Activated naive CD4-positive, alpha-beta T cell treated with anti-CD3 and anti-CD28 coated beads for 36 hours (primary cell): ENCODE measurements at regions of chr1 and their contacts with region 1.

Region 1: DNA sequence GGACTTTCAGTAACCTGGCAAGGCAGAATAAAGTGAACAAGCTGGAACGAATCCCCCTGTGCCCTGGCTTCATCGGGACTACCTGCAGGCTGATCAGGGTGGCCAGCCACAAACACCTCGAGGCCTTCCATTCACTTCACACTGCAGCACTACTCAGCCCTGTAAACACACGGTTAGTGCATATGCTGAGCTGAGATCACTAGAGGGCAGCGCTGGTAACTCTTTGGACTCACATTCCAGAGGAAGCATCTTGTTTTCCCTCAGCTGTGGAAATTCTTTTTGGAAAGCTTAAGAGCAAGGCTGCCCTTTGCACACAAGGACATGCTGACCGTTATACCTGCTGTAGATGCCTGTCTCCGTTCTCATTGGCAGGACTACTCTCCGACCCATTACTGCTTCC is 32.1 kb downstream of the PCSK9 start:
- DNase-seq: peak; percentile 39
- H3K4me3 Mint-ChIP-seq: no peak overlapping the region
- H3K27ac Mint-ChIP-seq: no peak overlapping the region
- H3K4me1 Mint-ChIP-seq: peaks cover 16% of the 10 kb centered on the region
- H3K27me3 Mint-ChIP-seq: no peaks in the 10 kb centered on the region

Region 2: GRCh38 chr1:55060133-55060999 is 11.1 kb before region 1 on chr1:
- CTCF ChIA-PET with region 1: interaction called, 5 read pairs
- intact Hi-C with region 1: loop called (anchors 1 kb)
- DNase-seq: peak; percentile 55
- H3K4me3 Mint-ChIP-seq: no peak overlapping the region
- H3K27ac Mint-ChIP-seq: no peak overlapping the region
- H3K4me1 Mint-ChIP-seq: peaks cover 9% of the 10 kb centered on the region
- H3K27me3 Mint-ChIP-seq: no peaks in the 10 kb centered on the region

Region 3: GRCh38 chr1:55127827-55128343 is 56.4 kb after region 1 on chr1:
- CTCF ChIA-PET with region 1: no interaction called
- intact Hi-C with region 1: loop called (anchors 1 kb)
- DNase-seq: peak; percentile 27
- H3K4me3 Mint-ChIP-seq: no peak overlapping the region
- H3K27ac Mint-ChIP-seq: peak overlapping the region; percentile 80
- H3K4me1 Mint-ChIP-seq: peaks cover 35% of the 10 kb centered on the region
- H3K27me3 Mint-ChIP-seq: no peaks in the 10 kb centered on the region

Region 4: GRCh38 chr1:55310505-55310971 is 239.1 kb after region 1 on chr1:
- CTCF ChIA-PET with region 1: no interaction called
- intact Hi-C with region 1: no loop called
- DNase-seq: peak; percentile 23
- H3K4me3 Mint-ChIP-seq: no peak overlapping the region
- H3K27ac Mint-ChIP-seq: no peak overlapping the region
- H3K4me1 Mint-ChIP-seq: peaks cover 10% of the 10 kb centered on the region
- H3K27me3 Mint-ChIP-seq: peaks cover under 1% of the 10 kb centered on the region

Region 5: DNA sequence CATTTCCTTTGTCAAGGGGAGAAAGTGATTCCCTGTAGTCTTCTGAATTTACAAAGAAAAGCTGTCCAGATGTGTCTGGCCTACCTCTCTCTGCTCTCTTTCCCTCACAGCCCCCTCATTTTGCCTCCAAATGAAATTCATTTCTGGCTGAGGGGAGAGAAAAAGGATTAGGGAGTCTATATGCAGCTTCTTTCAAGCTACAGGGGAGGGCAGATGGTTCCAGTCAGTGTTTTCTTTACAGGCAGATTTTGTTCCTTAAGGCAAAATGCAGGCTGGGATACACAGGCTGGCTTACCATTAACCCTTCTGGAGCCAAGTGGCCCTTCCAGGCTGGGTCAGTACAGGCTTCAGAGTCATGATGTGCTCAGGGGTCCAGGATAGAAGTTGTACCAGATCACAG is 341.8 kb after region 1 on chr1:
- CTCF ChIA-PET with region 1: no interaction called
- intact Hi-C with region 1: no loop called
- DNase-seq: no peak
- H3K4me3 Mint-ChIP-seq: no peak overlapping the region
- H3K27ac Mint-ChIP-seq: no peak overlapping the region
- H3K4me1 Mint-ChIP-seq: no peaks in the 10 kb centered on the region
- H3K27me3 Mint-ChIP-seq: peaks cover 9% of the 10 kb centered on the region